MCF 10A (cell line): ENCODE measurements at regions of chr1 and their contacts with region 1.

Region 1: DNA sequence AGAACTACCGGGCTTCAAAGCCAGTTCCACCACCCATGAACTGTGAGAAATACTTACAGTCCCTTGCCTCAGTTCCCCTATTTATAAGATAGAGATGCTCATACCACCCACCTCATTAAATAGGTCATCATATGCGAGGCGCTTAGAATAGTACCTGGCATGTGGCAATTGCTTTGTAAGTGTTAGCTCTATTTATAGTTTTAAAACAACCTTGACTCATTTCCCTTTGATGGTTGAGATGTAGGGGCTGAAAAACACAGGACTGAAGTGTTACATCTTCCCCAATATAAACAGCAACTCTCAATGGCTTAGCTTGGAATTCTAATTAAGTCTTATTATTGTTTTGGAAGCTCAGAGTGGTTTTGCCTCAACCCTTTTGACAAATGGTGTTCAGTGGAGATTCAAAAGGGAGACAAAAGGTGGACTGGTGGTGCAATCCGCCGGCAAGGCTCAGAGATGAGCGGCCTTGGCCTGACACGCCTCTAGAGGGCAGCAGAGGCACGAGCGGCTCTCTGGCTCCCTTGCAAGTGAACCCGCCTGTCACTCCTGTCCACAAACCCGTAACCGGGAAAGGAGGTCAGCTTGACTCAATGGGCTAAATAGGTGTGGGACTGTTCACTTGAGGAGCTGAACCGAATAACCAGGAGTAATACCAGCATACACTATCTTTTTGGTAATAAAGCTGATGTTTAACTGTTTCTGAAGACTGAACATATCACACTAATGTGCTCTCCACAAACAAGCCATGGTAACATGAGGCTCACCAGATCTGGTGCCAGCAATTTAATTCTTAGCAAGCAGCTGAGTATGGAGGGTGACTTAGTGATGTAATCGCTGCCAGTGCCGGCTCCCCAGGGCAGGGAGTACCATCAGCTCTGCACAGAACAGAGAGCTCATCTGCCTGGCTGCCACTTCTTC is 19.5 kb upstream of the SMYD2 start:
- DNase-seq: peak; percentile 93
- H3K4me3 Mint-ChIP-seq: no peak overlapping the region
- H3K27ac Mint-ChIP-seq: no peak overlapping the region
- H3K4me1 Mint-ChIP-seq: peaks cover 12% of the 10 kb centered on the region
- H3K27me3 Mint-ChIP-seq: peaks cover 61% of the 10 kb centered on the region
- CTCF ChIP-seq: peak; percentile 100

Region 2: DNA sequence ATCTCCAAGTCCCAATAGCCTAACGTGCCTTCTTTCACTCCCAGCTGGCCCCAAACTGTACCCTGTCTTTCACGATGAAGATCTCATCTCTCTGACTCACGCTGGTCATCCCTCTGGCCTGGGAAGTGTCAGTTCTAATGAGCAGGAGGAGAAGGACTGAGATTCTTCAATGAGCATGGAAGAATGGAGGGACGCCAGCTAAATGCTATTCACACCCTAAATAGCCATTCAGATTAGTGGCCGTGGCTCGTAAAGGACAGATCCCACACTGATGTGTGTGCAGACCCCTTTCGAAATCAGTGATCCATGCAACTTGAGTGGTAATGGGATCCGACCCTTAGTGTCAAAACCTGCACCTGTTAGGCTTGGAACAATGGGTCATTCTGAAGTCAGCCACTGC is 56.4 kb before region 1 on chr1:
- CTCF ChIA-PET with region 1: interaction called, 41 read pairs
- POLR2A ChIA-PET with region 1: no interaction called
- intact Hi-C with region 1: no loop called
- DNase-seq: no peak
- H3K4me3 Mint-ChIP-seq: no peak overlapping the region
- H3K27ac Mint-ChIP-seq: no peak overlapping the region
- H3K4me1 Mint-ChIP-seq: no peaks in the 10 kb centered on the region
- H3K27me3 Mint-ChIP-seq: peaks cover 2% of the 10 kb centered on the region
- CTCF ChIP-seq: no peak

Region 3: DNA sequence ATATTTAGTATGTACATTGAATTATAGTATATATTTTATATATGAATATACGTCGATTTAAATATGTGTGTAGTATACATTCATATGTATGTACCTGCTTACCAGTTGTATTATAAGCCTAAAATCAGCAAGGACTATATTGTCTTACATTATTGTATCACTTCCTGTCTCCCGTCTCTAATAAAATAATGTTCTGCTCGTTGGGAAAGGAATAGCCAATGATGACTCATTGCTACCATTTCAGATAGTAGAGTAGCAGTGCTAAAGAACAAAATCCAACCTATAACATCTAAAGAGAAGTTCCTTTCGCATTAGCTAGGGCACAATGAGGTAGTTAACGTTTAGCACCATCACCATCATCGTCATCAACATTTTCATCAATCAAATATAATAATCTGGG is 20.4 kb before region 1 on chr1:
- CTCF ChIA-PET with region 1: interaction called, 34 read pairs
- POLR2A ChIA-PET with region 1: no interaction called
- intact Hi-C with region 1: no loop called
- DNase-seq: peak; percentile 32
- H3K4me3 Mint-ChIP-seq: no peak overlapping the region
- H3K27ac Mint-ChIP-seq: no peak overlapping the region
- H3K4me1 Mint-ChIP-seq: no peaks in the 10 kb centered on the region
- H3K27me3 Mint-ChIP-seq: peaks cover 31% of the 10 kb centered on the region
- CTCF ChIP-seq: no peak

Region 4: GRCh38 chr1:214303141-214303930 is 41.9 kb after region 1 on chr1:
- CTCF ChIA-PET with region 1: interaction called, 96 read pairs
- POLR2A ChIA-PET with region 1: no interaction called
- intact Hi-C with region 1: no loop called
- DNase-seq: no peak
- H3K4me3 Mint-ChIP-seq: no peak overlapping the region
- H3K27ac Mint-ChIP-seq: no peak overlapping the region
- H3K4me1 Mint-ChIP-seq: no peaks in the 10 kb centered on the region
- H3K27me3 Mint-ChIP-seq: no peaks in the 10 kb centered on the region
- CTCF ChIP-seq: no peak

Region 5: DNA sequence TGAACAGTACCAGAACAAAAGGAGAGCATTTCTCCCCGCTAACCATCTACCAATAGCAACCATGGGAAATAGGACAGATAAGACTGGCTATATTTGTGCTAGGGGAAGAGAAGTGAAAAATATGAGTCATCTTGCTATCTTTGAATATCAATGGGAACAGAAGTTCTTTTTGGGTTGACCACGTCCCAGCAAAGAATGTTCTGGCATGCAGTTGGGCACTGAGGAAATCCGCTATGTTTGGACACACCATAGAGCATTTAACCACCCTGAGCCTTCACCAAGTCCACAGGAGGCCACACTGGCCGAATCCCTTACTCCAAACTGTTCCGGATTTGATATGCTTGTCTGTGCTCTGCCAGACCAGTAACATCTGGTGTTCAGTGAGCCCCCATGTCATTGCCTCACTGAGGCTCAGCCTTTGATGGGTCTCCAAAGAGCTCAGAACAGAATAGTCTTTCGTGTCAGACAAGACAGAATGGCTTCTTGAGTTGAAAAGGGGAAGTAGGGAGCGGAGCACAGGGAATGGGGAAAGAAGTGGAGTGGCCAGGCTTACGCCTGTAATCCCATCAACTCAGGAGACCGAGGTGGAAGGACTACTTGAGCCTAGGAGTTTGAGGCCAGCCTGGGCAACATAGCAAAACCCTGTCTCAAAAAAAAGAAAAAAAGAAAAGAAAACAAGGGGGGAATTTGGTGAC is 100.9 kb after region 1 on chr1:
- CTCF ChIA-PET with region 1: interaction called, 12 read pairs
- POLR2A ChIA-PET with region 1: no interaction called
- intact Hi-C with region 1: no loop called
- DNase-seq: no peak
- H3K4me3 Mint-ChIP-seq: no peak overlapping the region
- H3K27ac Mint-ChIP-seq: peak overlapping the region; percentile 50
- H3K4me1 Mint-ChIP-seq: peaks cover 6% of the 10 kb centered on the region
- H3K27me3 Mint-ChIP-seq: no peaks in the 10 kb centered on the region
- CTCF ChIP-seq: no peak

Region 6: DNA sequence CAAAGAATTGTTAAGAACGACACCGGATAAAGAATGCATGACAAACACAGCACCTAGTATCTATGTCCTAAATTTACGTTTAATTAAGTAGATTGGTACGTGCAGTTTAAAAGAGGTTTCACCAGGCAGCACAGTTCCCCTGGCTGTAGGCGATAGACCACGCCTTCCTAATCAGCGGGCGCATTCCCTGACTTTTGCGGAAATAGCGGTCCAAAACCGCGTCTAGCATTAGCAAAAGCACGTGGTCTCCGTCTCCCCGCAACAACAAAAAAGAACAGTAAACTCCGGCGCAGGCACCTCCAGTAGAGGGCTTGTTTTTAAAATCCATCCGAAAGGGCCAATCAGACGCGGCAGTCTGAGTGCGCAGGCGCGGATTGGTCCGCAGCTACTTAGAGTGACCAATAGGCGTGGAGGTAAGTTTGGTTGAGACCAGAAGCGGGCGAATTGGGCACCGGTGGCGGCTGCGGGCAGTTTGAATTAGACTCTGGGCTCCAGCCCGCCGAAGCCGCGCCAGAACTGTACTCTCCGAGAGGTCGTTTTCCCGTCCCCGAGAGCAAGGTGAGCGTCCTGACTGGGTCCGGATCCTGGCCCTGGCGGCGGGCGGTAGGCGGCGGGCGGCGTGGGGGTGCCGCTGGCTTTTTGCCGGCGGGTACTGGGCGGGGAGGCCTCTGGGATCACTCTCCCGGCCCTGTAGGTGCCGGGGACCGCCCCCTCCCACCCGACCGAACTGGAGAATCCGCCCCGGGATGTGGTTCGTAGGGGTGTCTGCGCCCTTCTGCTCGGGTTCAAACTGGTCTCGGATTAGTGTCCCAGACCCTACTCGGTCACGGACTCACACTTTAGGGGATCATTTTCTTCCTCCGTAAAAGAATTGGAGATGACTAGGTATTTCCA is 341.5 kb after region 1 on chr1 and contains the start of gene CENPF:
- CTCF ChIA-PET with region 1: interaction called, 15 read pairs
- POLR2A ChIA-PET with region 1: no interaction called
- intact Hi-C with region 1: no loop called
- DNase-seq: peak; percentile 100
- H3K4me3 Mint-ChIP-seq: peak within 1 kb of the TSS; percentile 96
- H3K27ac Mint-ChIP-seq: peak within 1 kb of the TSS; percentile 94
- H3K4me1 Mint-ChIP-seq: peaks cover 16% of the 10 kb centered on the region
- H3K27me3 Mint-ChIP-seq: no peaks in the 10 kb centered on the region
- CTCF ChIP-seq: peak; percentile 28
- total RNA-seq, gene CENPF: 88.8 and 135 TPM in 2 replicates